Aorta (tissue), 5 donors: ENCODE measurements at regions of chrX and their contacts with region 1.

Region 1: DNA sequence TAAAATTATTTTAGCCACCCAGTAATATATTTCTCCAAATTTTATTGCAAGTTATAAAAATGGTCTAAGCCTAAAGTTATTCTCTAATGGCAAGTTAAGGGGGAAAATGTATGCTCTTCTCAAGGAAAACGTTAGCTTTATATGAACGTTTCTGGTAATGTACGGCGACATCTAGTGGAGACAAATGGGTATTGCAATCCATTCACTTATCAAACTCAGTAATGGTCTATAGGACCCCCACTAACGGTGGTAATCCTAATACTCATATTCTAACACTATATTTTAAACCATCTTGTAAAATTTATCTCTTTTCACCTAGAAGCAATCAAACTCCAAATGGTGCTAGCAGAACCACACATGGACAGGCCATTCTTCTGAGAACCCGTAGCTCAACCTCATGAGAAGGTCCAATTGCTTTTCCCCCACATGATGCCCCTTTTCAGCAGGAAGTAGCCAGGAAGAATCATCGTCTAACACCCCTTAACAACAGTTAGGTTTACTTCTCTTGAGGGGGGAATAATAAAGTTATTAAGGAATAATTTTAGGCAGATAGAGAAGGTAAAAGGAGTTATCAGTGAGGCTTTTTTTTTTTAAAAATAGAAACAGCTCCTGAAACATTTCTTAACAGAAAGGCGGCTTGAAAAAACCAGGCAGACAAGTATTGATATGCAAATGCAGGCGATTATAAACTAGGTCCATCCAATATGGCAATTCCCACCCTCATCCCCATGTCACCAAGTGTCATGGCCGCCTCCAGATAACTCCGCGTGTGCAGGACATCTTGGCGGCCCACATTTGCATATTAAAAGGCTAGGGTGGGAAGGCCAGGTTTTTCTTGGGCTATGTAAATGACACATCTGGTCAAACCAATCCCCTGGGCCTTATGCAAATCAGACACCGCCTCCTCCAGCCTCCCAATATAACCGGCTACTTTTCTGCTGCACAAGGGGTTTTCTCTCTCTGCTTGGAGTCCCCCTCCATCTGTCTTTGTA is 35.0 kb downstream of the NUDT11 start:
- DNase-seq: no peak
- ATAC-seq: no peak
- H3K4me3 ChIP-seq: no peak overlapping the region
- H3K27ac ChIP-seq: no peak overlapping the region
- H3K4me1 ChIP-seq: no peaks in the 10 kb centered on the region
- H3K27me3 ChIP-seq: no peaks in the 10 kb centered on the region

Region 2: GRCh38 chrX:49884290-49884862 is 1577.0 kb before region 1 on chrX:
- intact Hi-C with region 1: no loop called
- DNase-seq: peak; percentile 74 to 84
- ATAC-seq: peak; percentile 39
- H3K4me3 ChIP-seq: no peak overlapping the region
- H3K27ac ChIP-seq: no peak overlapping the region
- H3K4me1 ChIP-seq: peaks cover 0 to 2% of the 10 kb centered on the region in 2 donors
- H3K27me3 ChIP-seq: no peaks in the 10 kb centered on the region

Region 3: GRCh38 chrX:51144852-51145442 is 316.4 kb before region 1 on chrX:
- intact Hi-C with region 1: loop called in 1 of 2 experiments (anchors 5 kb)
- DNase-seq: no peak
- ATAC-seq: no peak
- H3K4me3 ChIP-seq: no peak overlapping the region
- H3K27ac ChIP-seq: no peak overlapping the region
- H3K4me1 ChIP-seq: no peaks in the 10 kb centered on the region
- H3K27me3 ChIP-seq: no peaks in the 10 kb centered on the region

Region 4: DNA sequence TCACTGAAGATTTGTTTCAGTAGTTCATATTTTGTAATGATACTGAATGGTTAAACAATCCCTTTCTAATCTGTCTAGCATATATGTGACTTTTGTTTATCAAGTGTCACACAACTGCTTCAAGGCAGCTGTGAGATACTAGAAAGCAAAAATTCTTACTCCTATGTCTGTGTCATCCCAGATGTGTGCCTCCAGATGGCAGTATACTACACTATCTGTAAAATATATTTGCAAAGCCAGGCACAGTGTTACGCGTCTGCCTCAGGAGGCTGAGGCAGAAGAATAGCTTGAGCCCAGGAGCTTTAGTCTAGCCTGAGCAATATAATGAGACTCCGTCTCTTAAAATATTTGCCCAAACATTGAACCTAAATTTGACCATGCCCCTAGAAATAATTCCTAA is 124.8 kb before region 1 on chrX:
- intact Hi-C with region 1: loop called in 1 of 2 experiments (anchors 5 kb)
- DNase-seq: no peak
- ATAC-seq: no peak
- H3K4me3 ChIP-seq: no peak overlapping the region
- H3K27ac ChIP-seq: no peak overlapping the region
- H3K4me1 ChIP-seq: no peaks in the 10 kb centered on the region
- H3K27me3 ChIP-seq: no peaks in the 10 kb centered on the region